ENCODE measurements at regions of chr13 and their contacts with region 1.

Region 1: GRCh38 chr13:50081679-50082425 is 66.6 kb downstream of the KCNRG start:
- DNase-seq: peak; percentile 99
- H3K4me3 Mint-ChIP-seq: peak overlapping the region; percentile 100
- H3K27ac Mint-ChIP-seq: peak overlapping the region; percentile 100
- H3K4me1 Mint-ChIP-seq: peaks cover 34% of the 10 kb centered on the region
- H3K27me3 Mint-ChIP-seq: no peaks in the 10 kb centered on the region

Region 2: GRCh38 chr13:49996951-49997895 is 84.6 kb before region 1 on chr13 and contains the start of gene TRIM13:
- intact Hi-C with region 1: loop called (anchors 1 kb)
- DNase-seq: peak; percentile 79
- H3K4me3 Mint-ChIP-seq: peak within 1 kb of the TSS; percentile 85
- H3K27ac Mint-ChIP-seq: peak within 1 kb of the TSS; percentile 89
- H3K4me1 Mint-ChIP-seq: peaks cover 31% of the 10 kb centered on the region
- H3K27me3 Mint-ChIP-seq: no peaks in the 10 kb centered on the region
- total RNA-seq, gene TRIM13: 17.2 and 17.9 TPM in 2 replicates

Region 3: GRCh38 chr13:50236898-50237318 is 155.1 kb after region 1 on chr13:
- intact Hi-C with region 1: loop called (anchors 5 kb)
- DNase-seq: peak; percentile 43
- H3K4me3 Mint-ChIP-seq: no peak overlapping the region
- H3K27ac Mint-ChIP-seq: peak overlapping the region; percentile 56
- H3K4me1 Mint-ChIP-seq: peaks cover 38% of the 10 kb centered on the region
- H3K27me3 Mint-ChIP-seq: peaks cover 32% of the 10 kb centered on the region

Region 4: GRCh38 chr13:50531917-50532899 is 450.4 kb after region 1 on chr13:
- intact Hi-C with region 1: loop called (anchors 5 kb)
- DNase-seq: no peak
- H3K4me3 Mint-ChIP-seq: no peak overlapping the region
- H3K27ac Mint-ChIP-seq: no peak overlapping the region
- H3K4me1 Mint-ChIP-seq: peaks cover 20% of the 10 kb centered on the region
- H3K27me3 Mint-ChIP-seq: peaks cover 43% of the 10 kb centered on the region

Region 5: GRCh38 chr13:50801087-50801931 is 719.5 kb after region 1 on chr13:
- intact Hi-C with region 1: loop called (anchors 10 kb)
- DNase-seq: peak; percentile 53
- H3K4me3 Mint-ChIP-seq: no peak overlapping the region
- H3K27ac Mint-ChIP-seq: no peak overlapping the region
- H3K4me1 Mint-ChIP-seq: peaks cover 20% of the 10 kb centered on the region
- H3K27me3 Mint-ChIP-seq: peaks cover 6% of the 10 kb centered on the region

Region 6: DNA sequence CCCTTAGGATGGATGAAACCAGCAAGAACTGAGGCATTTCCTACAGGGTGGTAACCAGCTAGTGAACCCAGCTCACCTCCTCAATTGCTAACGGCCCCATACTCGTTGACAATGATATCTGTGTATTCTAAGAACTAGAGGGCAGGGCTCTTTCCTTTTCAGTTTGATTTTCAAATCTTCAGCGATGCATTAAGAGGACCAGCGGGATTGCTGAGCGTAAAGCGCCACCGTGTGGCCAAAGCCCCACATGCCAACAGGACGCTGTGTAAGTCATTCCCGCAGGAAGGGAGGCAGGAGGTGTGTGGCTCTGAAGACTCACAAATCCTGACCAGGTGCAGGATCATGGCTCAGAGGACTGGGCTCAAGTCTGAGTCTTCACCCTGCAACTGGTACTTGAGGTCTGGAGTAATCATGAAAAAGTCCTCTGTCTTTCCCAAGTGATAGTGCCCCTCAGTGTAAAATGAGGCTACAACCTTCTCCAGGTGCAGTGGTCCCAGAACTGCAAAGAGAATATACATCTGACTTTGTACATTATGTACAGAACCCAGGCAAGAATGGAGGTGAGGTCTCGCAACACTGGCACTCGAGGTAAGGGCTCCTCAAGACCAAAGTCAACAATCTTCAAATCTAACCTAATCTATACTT is 988.3 kb after region 1 on chr13:
- intact Hi-C with region 1: loop called (anchors 10 kb)
- DNase-seq: peak; percentile 72
- H3K4me3 Mint-ChIP-seq: no peak overlapping the region
- H3K27ac Mint-ChIP-seq: no peak overlapping the region
- H3K4me1 Mint-ChIP-seq: peaks cover 29% of the 10 kb centered on the region
- H3K27me3 Mint-ChIP-seq: peaks cover 16% of the 10 kb centered on the region